MCF 10A (cell line): ENCODE measurements at regions of chr1 and their contacts with region 1.

Region 1: GRCh38 chr1:109984456-109985275 is at the start of gene AHCYL1:
- DNase-seq: peak; percentile 99
- H3K4me3 Mint-ChIP-seq: peak within 1 kb of the TSS; percentile 92
- H3K27ac Mint-ChIP-seq: peak within 1 kb of the TSS; percentile 99
- H3K4me1 Mint-ChIP-seq: peaks cover 58% of the 10 kb centered on the region
- H3K27me3 Mint-ChIP-seq: no peaks in the 10 kb centered on the region
- CTCF ChIP-seq: peak; percentile 89
- total RNA-seq, gene AHCYL1: 104 and 106 TPM in 2 replicates

Region 2: GRCh38 chr1:109643385-109644230 is 341.1 kb before region 1 on chr1:
- CTCF ChIA-PET with region 1: interaction called, 84 read pairs
- POLR2A ChIA-PET with region 1: interaction called, 7 read pairs
- intact Hi-C with region 1: loop called (anchors 1 kb)
- DNase-seq: peak; percentile 80
- H3K4me3 Mint-ChIP-seq: no peak overlapping the region
- H3K27ac Mint-ChIP-seq: no peak overlapping the region
- H3K4me1 Mint-ChIP-seq: no peaks in the 10 kb centered on the region
- H3K27me3 Mint-ChIP-seq: no peaks in the 10 kb centered on the region
- CTCF ChIP-seq: peak; percentile 85

Region 3: DNA sequence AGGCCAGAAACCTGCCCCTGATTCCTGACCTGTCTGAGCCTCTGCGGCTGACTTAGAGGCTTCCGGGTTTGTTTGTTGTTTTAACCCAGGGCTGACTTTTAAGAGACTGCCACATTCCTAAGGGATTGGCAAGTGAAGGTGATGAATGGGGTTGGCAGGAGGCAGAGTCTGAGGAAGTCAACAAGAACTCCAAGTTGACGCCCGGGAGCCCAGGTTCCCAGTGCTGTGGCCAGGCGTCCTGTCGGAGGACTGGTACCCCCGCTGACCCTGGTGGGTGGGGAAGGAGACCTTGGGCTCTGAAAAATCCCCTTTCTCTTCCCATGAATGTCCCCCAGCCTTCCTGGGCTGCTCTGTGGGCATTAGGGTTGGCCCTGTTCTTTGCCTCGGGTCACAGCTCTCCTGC is 201.2 kb before region 1 on chr1:
- CTCF ChIA-PET with region 1: interaction called, 969 read pairs
- POLR2A ChIA-PET with region 1: interaction called, 82 read pairs
- intact Hi-C with region 1: no loop called
- DNase-seq: peak; percentile 91
- H3K4me3 Mint-ChIP-seq: no peak overlapping the region
- H3K27ac Mint-ChIP-seq: peak overlapping the region; percentile 81
- H3K4me1 Mint-ChIP-seq: peaks cover 31% of the 10 kb centered on the region
- H3K27me3 Mint-ChIP-seq: no peaks in the 10 kb centered on the region
- CTCF ChIP-seq: no peak

Region 4: GRCh38 chr1:109902204-109902985 is 82.3 kb before region 1 on chr1:
- CTCF ChIA-PET with region 1: interaction called, 10 read pairs
- POLR2A ChIA-PET with region 1: no interaction called
- intact Hi-C with region 1: no loop called
- DNase-seq: no peak
- H3K4me3 Mint-ChIP-seq: no peak overlapping the region
- H3K27ac Mint-ChIP-seq: no peak overlapping the region
- H3K4me1 Mint-ChIP-seq: peaks cover 21% of the 10 kb centered on the region
- H3K27me3 Mint-ChIP-seq: no peaks in the 10 kb centered on the region
- CTCF ChIP-seq: no peak

Region 5: GRCh38 chr1:110011527-110012041 is 26.9 kb after region 1 on chr1:
- CTCF ChIA-PET with region 1: interaction called, 93 read pairs
- POLR2A ChIA-PET with region 1: interaction called, 70 read pairs
- intact Hi-C with region 1: loop called (anchors 1 kb)
- DNase-seq: peak; percentile 73
- H3K4me3 Mint-ChIP-seq: no peak overlapping the region
- H3K27ac Mint-ChIP-seq: peak overlapping the region; percentile 39
- H3K4me1 Mint-ChIP-seq: peaks cover 13% of the 10 kb centered on the region
- H3K27me3 Mint-ChIP-seq: no peaks in the 10 kb centered on the region
- CTCF ChIP-seq: peak; percentile 46